CD4-positive, alpha-beta T cell (primary cell): ENCODE measurements at regions of chr5 and their contacts with region 1.

Region 1: GRCh38 chr5:35822511-35822910 is 34.2 kb upstream of the IL7R start:
- DNase-seq: peak; percentile 38 to 79 (median 58)
- ATAC-seq: peak; percentile 72
- H3K4me3 ChIP-seq: peak overlapping the region; percentile 5
- H3K4me3 Mint-ChIP-seq: peak overlapping the region; percentile 70
- H3K27ac ChIP-seq: peak overlapping the region; percentile 50 to 54
- H3K27ac Mint-ChIP-seq: peak overlapping the region; percentile 87
- H3K4me1 ChIP-seq: peaks cover 85% of the 10 kb centered on the region
- H3K4me1 Mint-ChIP-seq: peaks cover 90% of the 10 kb centered on the region
- H3K27me3 ChIP-seq: no peaks in the 10 kb centered on the region
- H3K27me3 Mint-ChIP-seq: no peaks in the 10 kb centered on the region
- CTCF ChIP-seq: no peak

Region 2: DNA sequence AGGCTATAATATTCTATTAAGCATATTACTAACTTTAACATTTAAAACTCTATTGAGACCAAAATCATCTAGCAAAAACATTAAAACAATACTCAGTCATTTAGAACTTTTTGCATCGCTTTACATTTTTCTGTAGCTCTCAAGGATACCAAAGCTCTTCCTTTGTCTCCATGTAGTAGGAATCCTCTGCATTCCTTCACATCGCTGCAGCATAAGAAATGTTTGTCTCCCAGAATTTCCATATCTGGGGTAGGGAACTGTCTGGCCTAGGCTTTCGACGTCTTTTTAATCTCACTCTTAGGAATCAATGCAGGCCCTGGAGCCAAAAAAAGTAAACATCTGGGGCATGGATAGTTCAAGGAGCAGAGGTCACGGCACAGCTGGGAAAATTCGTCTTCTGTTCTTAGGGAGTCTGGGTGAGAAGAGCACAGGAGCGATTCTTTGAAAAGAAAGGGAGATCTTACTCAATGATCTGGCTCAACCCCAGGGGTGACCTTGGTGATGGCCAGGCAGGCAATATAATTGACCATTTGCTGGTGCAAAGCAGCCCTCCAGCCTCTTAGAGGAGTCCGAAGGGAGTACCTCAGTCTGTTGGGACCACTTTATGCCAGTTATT is 1189.6 kb before region 1 on chr5:
- CTCF ChIA-PET with region 1: no interaction called
- POLR2A ChIA-PET with region 1: no interaction called
- intact Hi-C with region 1: no loop called
- DNase-seq: no peak
- ATAC-seq: no peak
- H3K4me3 ChIP-seq: no peak overlapping the region
- H3K4me3 Mint-ChIP-seq: no peak overlapping the region
- H3K27ac ChIP-seq: no peak overlapping the region
- H3K27ac Mint-ChIP-seq: no peak overlapping the region
- H3K4me1 ChIP-seq: no peaks in the 10 kb centered on the region
- H3K4me1 Mint-ChIP-seq: no peaks in the 10 kb centered on the region
- H3K27me3 ChIP-seq: no peaks in the 10 kb centered on the region
- H3K27me3 Mint-ChIP-seq: no peaks in the 10 kb centered on the region
- CTCF ChIP-seq: no peak

Region 3: GRCh38 chr5:35626108-35626507 is 196.4 kb before region 1 on chr5:
- CTCF ChIA-PET with region 1: no interaction called
- POLR2A ChIA-PET with region 1: no interaction called
- intact Hi-C with region 1: no loop called
- DNase-seq: no peak
- ATAC-seq: no peak
- H3K4me3 ChIP-seq: no peak overlapping the region
- H3K4me3 Mint-ChIP-seq: no peak overlapping the region
- H3K27ac ChIP-seq: no peak overlapping the region
- H3K27ac Mint-ChIP-seq: no peak overlapping the region
- H3K4me1 ChIP-seq: no peaks in the 10 kb centered on the region
- H3K4me1 Mint-ChIP-seq: peaks cover 5% of the 10 kb centered on the region
- H3K27me3 ChIP-seq: no peaks in the 10 kb centered on the region
- H3K27me3 Mint-ChIP-seq: no peaks in the 10 kb centered on the region
- CTCF ChIP-seq: no peak

Region 4: DNA sequence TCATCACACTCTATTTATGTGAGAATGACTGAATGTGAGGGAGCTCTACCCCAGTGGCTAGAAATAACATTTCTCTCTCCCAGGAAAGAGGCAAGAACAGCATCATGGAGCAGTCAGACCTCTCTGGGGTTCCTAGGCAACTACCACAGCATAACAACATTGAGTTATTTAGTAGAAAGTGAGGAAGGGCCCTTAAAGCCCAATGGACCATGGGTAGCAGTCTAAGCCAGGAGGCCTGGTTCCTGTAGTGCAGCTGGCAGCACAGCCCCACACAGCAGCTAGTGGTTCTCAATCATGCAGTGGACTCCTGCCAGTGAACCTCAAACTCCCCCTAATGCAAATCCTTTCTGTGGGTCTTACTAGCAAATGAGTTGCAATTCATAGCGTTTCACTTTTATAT is 149.5 kb before region 1 on chr5:
- CTCF ChIA-PET with region 1: no interaction called
- POLR2A ChIA-PET with region 1: interaction called, 11 read pairs
- intact Hi-C with region 1: no loop called
- DNase-seq: peak in 12 of 14 experiments; percentile 3 to 70 (median 23)
- ATAC-seq: peak; percentile 74
- H3K4me3 ChIP-seq: no peak overlapping the region
- H3K4me3 Mint-ChIP-seq: peak overlapping the region; percentile 63
- H3K27ac ChIP-seq: peak overlapping the region in 1 of 2 donors; percentile 25
- H3K27ac Mint-ChIP-seq: peak overlapping the region; percentile 93
- H3K4me1 ChIP-seq: peaks cover 10% of the 10 kb centered on the region
- H3K4me1 Mint-ChIP-seq: peaks cover 78% of the 10 kb centered on the region
- H3K27me3 ChIP-seq: no peaks in the 10 kb centered on the region
- H3K27me3 Mint-ChIP-seq: no peaks in the 10 kb centered on the region
- CTCF ChIP-seq: no peak

Region 5: GRCh38 chr5:35785601-35786085 is 36.9 kb before region 1 on chr5:
- CTCF ChIA-PET with region 1: interaction called, 3 read pairs
- POLR2A ChIA-PET with region 1: interaction called, 71 read pairs
- intact Hi-C with region 1: no loop called
- DNase-seq: peak in 4 of 14 experiments; percentile 15 to 43 (median 25)
- ATAC-seq: peak; percentile 71
- H3K4me3 ChIP-seq: no peak overlapping the region
- H3K4me3 Mint-ChIP-seq: peak overlapping the region; percentile 64
- H3K27ac ChIP-seq: no peak overlapping the region
- H3K27ac Mint-ChIP-seq: peak overlapping the region; percentile 79
- H3K4me1 ChIP-seq: peaks cover 40% of the 10 kb centered on the region
- H3K4me1 Mint-ChIP-seq: peaks cover 86% of the 10 kb centered on the region
- H3K27me3 ChIP-seq: no peaks in the 10 kb centered on the region
- H3K27me3 Mint-ChIP-seq: no peaks in the 10 kb centered on the region
- CTCF ChIP-seq: no peak

Region 6: GRCh38 chr5:35803191-35803651 is 19.3 kb before region 1 on chr5:
- CTCF ChIA-PET with region 1: interaction called, 4 read pairs
- POLR2A ChIA-PET with region 1: interaction called, 16 read pairs
- intact Hi-C with region 1: no loop called
- DNase-seq: peak in 5 of 14 experiments; percentile 22 to 72 (median 62)
- ATAC-seq: peak; percentile 51
- H3K4me3 ChIP-seq: no peak overlapping the region
- H3K4me3 Mint-ChIP-seq: peak overlapping the region; percentile 49
- H3K27ac ChIP-seq: peak overlapping the region in 1 of 2 donors; percentile 23
- H3K27ac Mint-ChIP-seq: peak overlapping the region; percentile 80
- H3K4me1 ChIP-seq: peaks cover 40% of the 10 kb centered on the region
- H3K4me1 Mint-ChIP-seq: peaks cover 85% of the 10 kb centered on the region
- H3K27me3 ChIP-seq: no peaks in the 10 kb centered on the region
- H3K27me3 Mint-ChIP-seq: no peaks in the 10 kb centered on the region
- CTCF ChIP-seq: no peak

Region 7: DNA sequence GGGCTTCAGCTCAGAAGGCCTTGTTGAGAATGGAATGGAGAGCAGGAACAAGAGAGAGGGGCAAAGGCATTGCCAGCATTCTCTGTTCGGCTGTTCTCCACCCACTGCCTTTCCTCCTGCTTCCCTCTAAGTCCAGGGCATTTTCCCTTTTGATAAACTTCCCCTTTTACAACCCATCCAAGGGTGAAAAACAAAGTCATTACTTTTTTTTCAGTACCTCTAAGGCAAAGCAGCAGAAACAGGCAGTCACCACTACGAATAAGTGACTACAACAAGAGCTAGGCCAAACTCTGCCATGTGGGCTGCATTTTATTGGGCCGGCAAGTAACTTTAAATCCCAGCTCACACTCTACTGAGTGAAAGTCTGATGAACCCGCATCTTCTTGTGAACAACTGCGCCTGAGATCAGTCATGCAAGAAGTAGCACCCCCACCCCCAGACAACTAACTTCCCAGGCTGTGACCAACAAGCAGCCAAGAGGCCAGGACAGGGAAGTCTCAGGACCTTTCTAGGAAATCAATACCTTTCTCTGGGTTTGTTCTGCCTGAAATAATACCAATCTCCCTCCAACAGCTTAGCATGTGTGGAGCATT is 47.3 kb after region 1 on chr5:
- CTCF ChIA-PET with region 1: no interaction called
- POLR2A ChIA-PET with region 1: interaction called, 45 read pairs
- intact Hi-C with region 1: no loop called
- DNase-seq: no peak
- ATAC-seq: peak; percentile 16
- H3K4me3 ChIP-seq: no peak overlapping the region
- H3K4me3 Mint-ChIP-seq: peak overlapping the region; percentile 31
- H3K27ac ChIP-seq: peak overlapping the region; percentile 1 to 34
- H3K27ac Mint-ChIP-seq: peak overlapping the region; percentile 99
- H3K4me1 ChIP-seq: peaks cover 52% of the 10 kb centered on the region
- H3K4me1 Mint-ChIP-seq: peaks cover 96% of the 10 kb centered on the region
- H3K27me3 ChIP-seq: no peaks in the 10 kb centered on the region
- H3K27me3 Mint-ChIP-seq: no peaks in the 10 kb centered on the region
- CTCF ChIP-seq: no peak

Region 8: DNA sequence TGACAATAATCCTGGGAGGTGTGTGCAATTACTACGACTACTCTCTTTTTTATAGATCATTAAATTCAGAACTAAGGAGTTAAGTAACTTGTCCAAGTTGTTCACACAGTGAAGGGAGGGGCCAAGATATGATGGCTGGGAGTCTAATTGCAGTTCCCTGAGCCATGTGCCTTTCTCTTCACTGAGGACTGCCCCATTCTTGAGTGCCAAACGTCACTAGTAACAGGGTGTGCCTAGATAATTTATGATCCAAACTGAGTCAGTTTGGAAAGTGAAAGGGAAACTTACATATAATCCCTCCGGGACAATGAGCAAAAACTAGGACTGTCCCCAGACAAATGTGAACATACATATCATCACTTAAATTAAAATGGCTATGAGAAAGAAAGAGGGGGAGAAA is 54.4 kb after region 1 on chr5:
- CTCF ChIA-PET with region 1: no interaction called
- POLR2A ChIA-PET with region 1: interaction called, 60 read pairs
- intact Hi-C with region 1: no loop called
- DNase-seq: no peak
- ATAC-seq: no peak
- H3K4me3 ChIP-seq: no peak overlapping the region
- H3K4me3 Mint-ChIP-seq: peak overlapping the region; percentile 47
- H3K27ac ChIP-seq: peak overlapping the region in 1 of 2 donors; percentile 32
- H3K27ac Mint-ChIP-seq: peak overlapping the region; percentile 85
- H3K4me1 ChIP-seq: peaks cover 46% of the 10 kb centered on the region
- H3K4me1 Mint-ChIP-seq: peaks cover 95% of the 10 kb centered on the region
- H3K27me3 ChIP-seq: no peaks in the 10 kb centered on the region
- H3K27me3 Mint-ChIP-seq: no peaks in the 10 kb centered on the region
- CTCF ChIP-seq: no peak

Region 9: DNA sequence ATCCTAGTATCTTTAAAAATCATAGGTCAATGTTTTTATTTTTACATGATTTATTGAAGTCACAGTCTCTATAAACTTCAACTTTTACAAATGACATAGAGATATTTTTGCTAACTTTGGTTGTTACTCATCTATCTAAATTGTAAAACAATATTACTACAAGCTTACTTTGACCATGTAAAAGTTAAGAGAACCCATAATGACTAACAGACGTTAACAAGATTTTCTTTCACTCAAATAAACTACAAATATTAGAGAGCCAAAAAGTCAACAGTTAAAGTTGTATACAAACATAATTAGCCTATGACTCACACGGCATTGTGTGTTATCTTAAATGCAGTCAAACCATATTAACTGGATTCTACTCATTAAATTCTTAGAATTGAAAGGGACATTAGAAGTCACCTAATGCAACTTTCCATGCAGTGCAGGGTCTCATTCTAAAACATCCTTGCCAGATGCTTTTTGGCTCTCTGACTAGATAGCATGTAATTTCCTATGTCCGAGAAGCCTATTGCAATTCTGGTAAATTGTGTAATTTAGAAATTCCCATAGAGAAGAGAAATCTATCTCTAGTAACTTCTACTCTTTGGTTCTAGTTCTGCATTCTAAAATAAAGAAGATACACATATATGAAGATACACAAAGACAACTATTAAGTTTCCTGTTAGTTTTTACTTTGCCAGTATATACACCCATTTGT is 286.4 kb after region 1 on chr5:
- CTCF ChIA-PET with region 1: no interaction called
- POLR2A ChIA-PET with region 1: no interaction called
- intact Hi-C with region 1: no loop called
- DNase-seq: no peak
- ATAC-seq: no peak
- H3K4me3 ChIP-seq: no peak overlapping the region
- H3K4me3 Mint-ChIP-seq: no peak overlapping the region
- H3K27ac ChIP-seq: no peak overlapping the region
- H3K27ac Mint-ChIP-seq: no peak overlapping the region
- H3K4me1 ChIP-seq: no peaks in the 10 kb centered on the region
- H3K4me1 Mint-ChIP-seq: no peaks in the 10 kb centered on the region
- H3K27me3 ChIP-seq: no peaks in the 10 kb centered on the region
- H3K27me3 Mint-ChIP-seq: no peaks in the 10 kb centered on the region
- CTCF ChIP-seq: no peak

Region 10: GRCh38 chr5:36151434-36152323 is 329.2 kb after region 1 on chr5 and contains the starts of genes LMBRD2 and SKP2:
- CTCF ChIA-PET with region 1: no interaction called
- POLR2A ChIA-PET with region 1: no interaction called
- intact Hi-C with region 1: no loop called
- DNase-seq: peak; percentile 90 to 99 (median 95)
- ATAC-seq: peak; percentile 96
- H3K4me3 ChIP-seq: peak within 1 kb of the TSS; percentile 92
- H3K4me3 Mint-ChIP-seq: peak within 1 kb of the TSS; percentile 95
- H3K27ac ChIP-seq: peak within 1 kb of the TSS; percentile 77 to 82
- H3K27ac Mint-ChIP-seq: peak within 1 kb of the TSS; percentile 86
- H3K4me1 ChIP-seq: peaks cover 30% of the 10 kb centered on the region
- H3K4me1 Mint-ChIP-seq: peaks cover 76% of the 10 kb centered on the region
- H3K27me3 ChIP-seq: no peaks in the 10 kb centered on the region
- H3K27me3 Mint-ChIP-seq: no peaks in the 10 kb centered on the region
- CTCF ChIP-seq: no peak
- total RNA-seq, gene LMBRD2: 4.1 to 4.2 TPM
- total RNA-seq, gene SKP2: 6.3 to 7.2 TPM